Common myeloid progenitor, CD34-positive (primary cell): ENCODE measurements at regions of chr9 and their contacts with region 1.

Region 1: GRCh38 chr9:126704873-126705766 is 91.4 kb downstream of the LMX1B start:
- DNase-seq: peak; percentile 76 to 88 (median 83)
- H3K4me3 ChIP-seq: peak overlapping the region in 3 of 7 experiments; percentile 7 to 26 (median 22)
- H3K27ac ChIP-seq: no peak overlapping the region
- H3K4me1 ChIP-seq: peaks cover 0 to 21% (median 15%) of the 10 kb centered on the region in 4 experiments
- H3K27me3 ChIP-seq: peaks cover 0 to 25% (median 2%) of the 10 kb centered on the region in 5 experiments

Region 2: GRCh38 chr9:126398403-126399058 is 306.6 kb before region 1 on chr9:
- CTCF ChIA-PET with region 1: no interaction called
- POLR2A ChIA-PET with region 1: no interaction called
- DNase-seq: peak; percentile 50 to 71 (median 69)
- H3K4me3 ChIP-seq: no peak overlapping the region
- H3K27ac ChIP-seq: no peak overlapping the region
- H3K4me1 ChIP-seq: peaks cover 9 to 42% (median 28%) of the 10 kb centered on the region in 4 experiments
- H3K27me3 ChIP-seq: no peaks in the 10 kb centered on the region

Region 3: DNA sequence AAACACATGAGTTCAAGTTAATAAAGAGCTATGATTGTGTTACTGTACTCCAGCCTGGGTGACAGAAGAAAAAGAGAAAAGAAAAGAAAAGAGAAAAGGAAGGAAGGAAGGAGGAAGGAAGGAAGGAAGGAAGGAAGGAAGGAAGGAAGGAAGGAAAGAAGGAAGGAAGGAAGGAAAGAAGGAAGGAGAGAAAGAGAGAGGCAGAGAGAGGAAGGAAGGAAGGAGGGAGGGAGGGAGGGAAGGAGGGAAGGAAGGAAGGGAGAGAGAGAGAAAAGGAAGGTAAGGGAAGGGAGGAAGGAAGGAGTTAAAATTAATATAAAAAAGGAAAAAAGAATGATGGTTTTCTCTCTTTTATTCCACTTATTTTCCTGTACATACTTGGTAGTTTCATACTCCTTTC is 10.3 kb after region 1 on chr9:
- CTCF ChIA-PET with region 1: interaction called, 46 read pairs
- POLR2A ChIA-PET with region 1: no interaction called
- DNase-seq: no peak
- H3K4me3 ChIP-seq: no peak overlapping the region
- H3K27ac ChIP-seq: no peak overlapping the region
- H3K4me1 ChIP-seq: peaks cover 3 to 21% (median 19%) of the 10 kb centered on the region in 4 experiments
- H3K27me3 ChIP-seq: no peaks in the 10 kb centered on the region

Region 4: GRCh38 chr9:126733005-126733404 is 27.9 kb after region 1 on chr9:
- CTCF ChIA-PET with region 1: interaction called, 26 read pairs
- POLR2A ChIA-PET with region 1: interaction called, 3 read pairs
- DNase-seq: no peak
- H3K4me3 ChIP-seq: no peak overlapping the region
- H3K27ac ChIP-seq: no peak overlapping the region
- H3K4me1 ChIP-seq: no peaks in the 10 kb centered on the region
- H3K27me3 ChIP-seq: no peaks in the 10 kb centered on the region

Region 5: DNA sequence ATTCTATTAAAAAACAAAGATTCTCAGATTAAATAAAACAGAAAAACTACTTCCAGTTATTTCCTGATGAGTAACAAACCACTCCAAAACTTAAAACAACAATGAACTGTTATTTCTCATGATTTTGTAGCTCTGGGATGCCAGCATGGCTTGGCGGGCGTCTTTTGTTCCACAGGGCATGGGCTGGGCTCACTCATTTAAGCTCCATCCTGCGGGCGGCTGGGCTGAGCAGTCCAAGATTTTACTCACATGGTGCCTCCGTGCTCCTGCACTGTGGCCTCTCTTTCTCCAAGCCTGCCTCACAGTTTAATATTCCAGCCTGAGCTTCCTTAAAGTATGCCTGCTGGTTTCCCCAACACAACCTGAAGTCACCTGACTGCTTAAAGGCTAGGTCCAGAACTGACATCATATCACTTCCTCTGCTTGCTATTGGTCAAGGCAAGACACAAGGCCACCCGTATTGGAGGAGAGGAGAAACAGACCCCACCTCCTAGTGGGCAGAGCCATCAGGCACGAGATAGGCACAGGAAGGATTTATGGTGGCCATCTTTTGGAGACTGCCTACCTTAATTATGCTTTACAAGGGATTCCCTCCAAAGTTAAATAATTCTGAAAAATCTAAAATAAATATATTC is 58.1 kb after region 1 on chr9:
- CTCF ChIA-PET with region 1: interaction called, 397 read pairs
- POLR2A ChIA-PET with region 1: no interaction called
- DNase-seq: no peak
- H3K4me3 ChIP-seq: no peak overlapping the region
- H3K27ac ChIP-seq: no peak overlapping the region
- H3K4me1 ChIP-seq: no peaks in the 10 kb centered on the region
- H3K27me3 ChIP-seq: no peaks in the 10 kb centered on the region

Region 6: GRCh38 chr9:126788046-126788445 is 82.9 kb after region 1 on chr9:
- CTCF ChIA-PET with region 1: interaction called, 397 read pairs
- POLR2A ChIA-PET with region 1: interaction called, 3 read pairs
- DNase-seq: no peak
- H3K4me3 ChIP-seq: no peak overlapping the region
- H3K27ac ChIP-seq: no peak overlapping the region
- H3K4me1 ChIP-seq: no peaks in the 10 kb centered on the region
- H3K27me3 ChIP-seq: peaks cover 0 to 15% (median 4%) of the 10 kb centered on the region in 5 experiments